A549 (cell line): ENCODE measurements at regions of chr13 and their contacts with region 1.

Region 1: GRCh38 chr13:39616087-39616694 is 13.2 kb upstream of the LHFPL6 start:
- DNase-seq: peak; percentile 53 to 54
- ATAC-seq: peak in 1 of 2 experiments; percentile 83; a peak in 3 of 6 replicates
- H3K4me3 ChIP-seq: no peak overlapping the region
- H3K27ac ChIP-seq: no peak overlapping the region
- H3K4me1 ChIP-seq: no peaks in the 10 kb centered on the region
- CTCF ChIP-seq: peak; percentile 72
- EP300 ChIP-seq: no peak
- POLR2A ChIP-seq: no peak
- RAD21 ChIP-seq: peak; percentile 64 to 74

Region 2: DNA sequence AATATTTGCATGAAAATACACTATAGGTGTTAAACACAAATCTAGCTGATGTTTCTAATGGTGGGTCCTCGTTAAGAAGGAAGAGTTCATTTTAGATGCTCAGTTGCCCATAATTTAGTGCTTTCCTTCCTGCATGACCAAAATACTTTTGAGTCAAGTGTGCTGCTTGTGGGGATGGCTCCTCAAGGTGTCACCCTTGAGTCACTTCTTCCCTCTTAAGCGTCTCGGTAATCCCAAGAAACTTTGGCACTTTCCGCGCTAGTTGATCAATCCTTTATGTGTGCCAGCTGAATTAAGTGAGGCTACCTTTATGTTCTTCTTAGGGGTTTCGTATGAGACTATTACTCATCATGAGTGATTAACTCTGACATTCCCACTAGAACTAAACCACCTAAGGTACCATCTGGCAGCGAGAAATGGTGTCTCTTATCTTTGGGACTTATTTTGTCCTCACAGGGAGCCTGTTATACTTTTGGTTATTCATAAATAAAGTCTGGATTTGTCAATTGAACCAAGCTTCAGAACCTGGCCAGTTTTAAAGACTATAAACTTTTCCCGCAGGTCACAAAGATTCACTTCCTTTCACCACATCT is 471.2 kb before region 1 on chr13:
- CTCF ChIA-PET with region 1: interaction called, 47 read pairs
- POLR2A ChIA-PET with region 1: no interaction called
- DNase-seq: peak; percentile 25 to 52
- ATAC-seq: peak; percentile 54 to 71; a peak in 4 of 6 replicates
- H3K4me3 ChIP-seq: no peak overlapping the region
- H3K27ac ChIP-seq: no peak overlapping the region
- H3K4me1 ChIP-seq: no peaks in the 10 kb centered on the region
- CTCF ChIP-seq: peak; percentile 47
- EP300 ChIP-seq: no peak
- POLR2A ChIP-seq: no peak
- RAD21 ChIP-seq: peak; percentile 59 to 65

Region 3: GRCh38 chr13:39273953-39274738 is 342.0 kb before region 1 on chr13:
- CTCF ChIA-PET with region 1: interaction called, 16 read pairs
- POLR2A ChIA-PET with region 1: no interaction called
- DNase-seq: peak in 1 of 2 experiments; percentile 5
- ATAC-seq: no peak
- H3K4me3 ChIP-seq: no peak overlapping the region
- H3K27ac ChIP-seq: no peak overlapping the region
- H3K4me1 ChIP-seq: no peaks in the 10 kb centered on the region
- CTCF ChIP-seq: peak; percentile 25; the same call in 2 of the 3 replicates
- EP300 ChIP-seq: no peak
- POLR2A ChIP-seq: no peak
- RAD21 ChIP-seq: peak; percentile 37 to 47; a peak in 4 of 5 replicates

Region 4: GRCh38 chr13:39415008-39415802 is 201.0 kb before region 1 on chr13:
- CTCF ChIA-PET with region 1: interaction called, 28 read pairs
- POLR2A ChIA-PET with region 1: no interaction called
- DNase-seq: peak in 1 of 2 experiments; percentile 24
- ATAC-seq: peak; percentile 39 to 59; a peak in 1 of 6 replicates
- H3K4me3 ChIP-seq: no peak overlapping the region
- H3K27ac ChIP-seq: no peak overlapping the region
- H3K4me1 ChIP-seq: no peaks in the 10 kb centered on the region
- CTCF ChIP-seq: peak; percentile 28
- EP300 ChIP-seq: no peak
- POLR2A ChIP-seq: no peak
- RAD21 ChIP-seq: peak; percentile 38 to 60; a peak in 4 of 5 replicates

Region 5: DNA sequence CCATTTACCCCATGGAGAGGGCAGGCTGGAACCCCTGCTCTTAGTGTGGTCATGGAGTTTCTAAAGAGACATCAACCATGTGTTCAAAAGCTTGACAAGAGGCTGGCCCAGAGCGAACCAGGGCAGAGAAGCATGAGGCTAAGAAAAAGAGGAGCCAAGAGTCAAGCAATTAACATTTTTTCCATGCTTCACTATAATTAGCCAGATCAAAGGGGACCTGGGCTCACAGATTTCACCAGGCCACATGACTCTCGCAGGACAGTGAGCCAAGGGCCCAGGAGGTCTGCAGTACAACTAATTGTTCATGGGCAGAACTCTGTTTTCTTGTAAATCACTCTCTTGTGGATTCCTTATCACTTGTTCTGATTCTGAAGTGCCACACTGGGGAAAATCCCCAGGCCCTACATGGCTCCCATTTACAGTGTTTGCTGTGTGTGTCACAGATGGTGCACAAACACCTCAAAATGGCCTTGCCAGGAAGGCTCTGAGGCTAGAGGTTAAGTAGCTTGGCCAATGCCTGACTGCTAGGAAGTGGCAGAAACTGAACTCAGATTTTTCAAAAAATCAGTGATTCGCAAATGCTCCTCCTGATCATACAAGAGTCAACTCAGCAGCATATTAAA is 114.4 kb before region 1 on chr13:
- CTCF ChIA-PET with region 1: no interaction called
- POLR2A ChIA-PET with region 1: no interaction called
- DNase-seq: no peak
- ATAC-seq: no peak
- H3K4me3 ChIP-seq: no peak overlapping the region
- H3K27ac ChIP-seq: no peak overlapping the region
- H3K4me1 ChIP-seq: no peaks in the 10 kb centered on the region
- CTCF ChIP-seq: no peak
- EP300 ChIP-seq: no peak
- POLR2A ChIP-seq: no peak
- RAD21 ChIP-seq: no peak

Region 6: GRCh38 chr13:39876258-39876657 is 260.1 kb after region 1 on chr13:
- CTCF ChIA-PET with region 1: no interaction called
- POLR2A ChIA-PET with region 1: no interaction called
- DNase-seq: peak; percentile 2 to 29
- ATAC-seq: peak in 1 of 2 experiments; percentile 31; a peak in 2 of 6 replicates
- H3K4me3 ChIP-seq: no peak overlapping the region
- H3K27ac ChIP-seq: no peak overlapping the region
- H3K4me1 ChIP-seq: 0 out of 3 replicates have a peak, but pooled peaks cover 6% of the 10 kb centered on the region
- CTCF ChIP-seq: no peak
- EP300 ChIP-seq: no peak
- POLR2A ChIP-seq: no peak
- RAD21 ChIP-seq: no peak